PC-9 (cell line): ENCODE measurements at regions of chr15 and their contacts with region 1.

Region 1: DNA sequence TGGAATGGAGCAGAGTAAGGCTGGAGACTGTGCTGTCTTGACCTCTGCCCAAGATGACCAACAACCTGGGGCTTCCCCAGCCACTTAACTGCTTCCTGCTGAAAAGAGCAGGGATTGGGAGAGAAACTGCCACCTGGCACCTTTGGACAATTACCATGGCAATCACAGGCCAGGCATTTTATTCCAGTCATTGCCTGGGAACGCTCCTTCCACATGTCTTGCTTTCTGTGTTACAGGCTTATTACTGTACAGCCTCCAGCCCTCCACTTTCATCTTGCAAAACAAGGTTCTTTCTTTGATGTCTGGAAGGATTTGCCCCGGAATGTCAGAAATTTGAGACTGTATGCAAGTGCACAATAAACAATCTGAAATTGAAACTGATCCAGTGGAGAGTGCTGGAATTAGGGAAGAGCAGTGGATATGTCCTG is 2.8 kb downstream of the PPP1R14D start:
- DNase-seq: peak; percentile 74 to 98
- H3K4me3 ChIP-seq: peak overlapping the region; percentile 22; the same call in 1 of the 2 replicates
- H3K27ac ChIP-seq: peak overlapping the region; percentile 100
- H3K4me1 ChIP-seq: peaks cover 47% of the 10 kb centered on the region
- H3K27me3 ChIP-seq: no peaks in the 10 kb centered on the region
- CTCF ChIP-seq: no peak

Region 2: GRCh38 chr15:40847205-40847961 is 21.7 kb after region 1 on chr15:
- CTCF ChIA-PET with region 1: interaction called, 3 read pairs
- POLR2A ChIA-PET with region 1: interaction called, 3 read pairs
- intact Hi-C with region 1: loop called (anchors 1 kb)
- DNase-seq: peak; percentile 72 to 77
- H3K4me3 ChIP-seq: peak overlapping the region; percentile 71; the same call in 1 of the 2 replicates
- H3K27ac ChIP-seq: peak overlapping the region; percentile 93
- H3K4me1 ChIP-seq: peaks cover 31% of the 10 kb centered on the region
- H3K27me3 ChIP-seq: no peaks in the 10 kb centered on the region
- CTCF ChIP-seq: no peak

Region 3: DNA sequence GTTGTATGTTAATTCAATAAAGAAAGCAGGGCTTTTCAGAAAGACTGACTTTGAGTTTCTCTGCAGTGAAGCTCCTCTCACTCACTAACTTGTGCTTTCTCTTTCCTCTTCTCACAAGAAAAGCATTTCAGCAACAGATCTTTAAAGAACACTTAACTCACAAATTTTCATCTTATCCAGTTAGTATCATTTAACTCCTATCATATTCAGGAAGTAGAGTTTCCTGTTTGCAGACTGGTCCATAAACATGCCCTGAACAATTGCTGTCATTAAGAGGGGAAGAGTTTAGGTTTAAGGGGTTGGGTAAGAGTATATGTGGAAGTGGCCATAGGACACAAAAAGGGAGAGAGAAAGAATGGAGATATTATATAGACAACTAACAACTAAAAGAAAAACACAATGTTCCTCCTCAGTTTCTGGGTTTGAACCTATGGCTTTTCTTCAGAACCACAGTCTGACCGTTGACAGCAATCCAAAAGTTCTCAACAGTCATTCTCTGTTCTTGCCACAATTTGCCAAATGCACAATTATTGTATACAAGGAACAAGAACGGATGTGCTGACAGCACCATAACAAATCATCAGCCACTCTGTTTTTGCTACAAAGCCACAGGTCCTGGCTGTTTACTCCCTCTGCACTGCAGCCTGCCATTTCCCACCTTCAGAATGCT is 191.5 kb after region 1 on chr15:
- CTCF ChIA-PET with region 1: interaction called, 10 read pairs
- POLR2A ChIA-PET with region 1: no interaction called
- intact Hi-C with region 1: no loop called
- DNase-seq: no peak
- H3K4me3 ChIP-seq: no peak overlapping the region
- H3K27ac ChIP-seq: no peak overlapping the region
- H3K4me1 ChIP-seq: peaks cover 13% of the 10 kb centered on the region
- H3K27me3 ChIP-seq: no peaks in the 10 kb centered on the region
- CTCF ChIP-seq: no peak